Prostate gland (tissue), 2 donors: ENCODE measurements at regions of chr4 and their contacts with region 1.

Region 1: DNA sequence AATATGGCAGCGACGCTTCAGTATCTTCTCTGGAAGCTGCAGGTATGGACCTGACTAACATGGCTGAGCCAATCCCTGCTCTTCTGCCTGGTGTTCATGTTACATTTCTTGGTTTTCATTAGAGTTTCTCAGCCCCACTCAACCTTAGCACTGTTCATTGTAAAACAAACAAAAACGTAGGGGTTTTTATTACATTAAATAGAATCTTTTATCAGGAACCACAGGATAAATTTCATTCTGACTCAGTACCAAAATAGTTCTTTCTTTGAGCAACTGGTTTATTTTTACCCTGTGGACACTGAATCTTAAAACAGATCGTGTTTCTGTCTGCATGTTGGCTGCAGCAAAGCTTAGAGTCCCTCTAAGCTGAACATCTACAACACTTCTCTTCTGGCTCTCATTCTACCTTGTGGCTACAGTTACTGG is 27.1 kb downstream of the FHIP1A start:
- DNase-seq: no peak
- H3K4me3 ChIP-seq: no peak overlapping the region
- H3K27ac ChIP-seq: no peak overlapping the region
- H3K4me1 ChIP-seq: no peaks in the 10 kb centered on the region
- H3K27me3 ChIP-seq: no peaks in the 10 kb centered on the region
- CTCF ChIP-seq: no peak
- POLR2A ChIP-seq: no peak

Region 2: GRCh38 chr4:151389311-151389710 is 46.8 kb before region 1 on chr4:
- intact Hi-C with region 1: loop called (anchors 5 kb)
- DNase-seq: no peak
- H3K4me3 ChIP-seq: no peak overlapping the region
- H3K27ac ChIP-seq: no peak overlapping the region
- H3K4me1 ChIP-seq: no peaks in the 10 kb centered on the region
- H3K27me3 ChIP-seq: no peaks in the 10 kb centered on the region
- CTCF ChIP-seq: no peak
- POLR2A ChIP-seq: no peak

Region 3: DNA sequence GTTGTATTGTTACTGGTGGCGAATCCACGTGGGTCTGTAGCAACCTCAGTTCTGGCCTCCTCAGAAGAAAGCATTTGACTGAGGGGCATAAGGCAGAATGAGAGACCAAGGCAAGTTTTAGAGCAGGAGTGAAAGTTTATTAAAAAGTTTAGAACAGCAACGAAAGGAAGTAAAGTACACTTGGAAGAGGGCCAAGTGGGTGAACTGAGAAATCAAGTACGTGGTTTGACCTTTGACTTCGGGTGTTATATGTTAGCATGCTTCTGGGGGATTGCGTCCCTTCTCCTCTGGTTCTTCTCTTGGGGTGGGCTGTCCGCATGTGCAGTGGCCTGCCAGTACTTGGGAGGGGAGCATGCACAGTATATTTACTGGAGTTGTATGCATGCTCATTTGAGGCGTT is 557.4 kb after region 1 on chr4:
- intact Hi-C with region 1: no loop called
- DNase-seq: no peak
- H3K4me3 ChIP-seq: no peak overlapping the region
- H3K27ac ChIP-seq: no peak overlapping the region
- H3K4me1 ChIP-seq: no peaks in the 10 kb centered on the region
- H3K27me3 ChIP-seq: no peaks in the 10 kb centered on the region
- CTCF ChIP-seq: no peak
- POLR2A ChIP-seq: no peak